ENCODE measurements at regions of chr3 and their contacts with region 1.

Region 1: DNA sequence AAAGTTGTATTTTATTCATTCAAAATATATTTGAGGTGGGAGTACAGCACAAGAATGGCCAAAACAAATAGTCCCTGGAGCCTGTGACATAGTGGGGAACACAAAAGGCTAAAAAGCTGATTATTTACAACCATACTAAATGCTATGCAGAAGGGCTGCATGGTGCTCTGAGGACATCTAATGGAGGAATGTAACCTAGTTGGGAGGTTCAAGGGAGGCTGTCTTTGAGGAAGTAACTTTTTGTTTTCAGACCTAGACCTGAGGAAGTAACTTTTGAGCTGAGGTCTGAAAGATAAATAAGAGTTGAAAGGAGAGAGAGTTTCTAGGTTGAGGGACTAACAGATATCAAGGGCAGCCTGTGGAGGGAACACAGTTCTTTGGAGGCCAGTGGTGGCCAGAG is 34.8 kb upstream of the RASA2 start:
- DNase-seq: peak in 2 of 7 donors; percentile 51 to 52
- H3K4me3 ChIP-seq: no peak overlapping the region
- H3K27ac ChIP-seq: peak overlapping the region in 1 of 5 donors; percentile 18
- H3K4me1 ChIP-seq: peaks cover 0 to 22% of the 10 kb centered on the region in 2 donors
- H3K27me3 ChIP-seq: no peaks in the 10 kb centered on the region
- CTCF ChIP-seq: peak; percentile 32 to 72 (median 64)
- POLR2A ChIP-seq: no peak

Region 2: DNA sequence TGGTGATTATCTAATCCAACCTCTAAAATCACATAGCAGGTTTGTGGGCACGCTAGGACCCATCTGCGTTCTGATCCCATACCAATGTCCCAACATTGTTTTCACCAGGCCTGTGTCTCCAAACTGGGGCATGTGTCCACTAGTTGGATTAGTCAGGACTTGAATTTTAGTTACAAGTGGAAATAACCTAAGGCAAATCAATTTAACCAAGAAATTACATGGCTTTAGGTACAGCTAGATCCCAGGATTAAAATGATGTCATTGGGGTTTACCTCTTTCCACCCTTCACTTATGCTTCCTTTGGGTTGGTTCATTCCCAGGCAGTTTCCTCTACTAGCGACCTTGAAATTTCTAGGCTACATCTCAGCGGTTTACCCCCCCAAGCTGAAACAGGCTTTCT is 267.6 kb before region 1 on chr3:
- intact Hi-C with region 1: no loop called
- DNase-seq: no peak
- H3K4me3 ChIP-seq: no peak overlapping the region
- H3K27ac ChIP-seq: no peak overlapping the region
- H3K4me1 ChIP-seq: no peaks in the 10 kb centered on the region
- H3K27me3 ChIP-seq: no peaks in the 10 kb centered on the region
- CTCF ChIP-seq: no peak
- POLR2A ChIP-seq: no peak

Region 3: DNA sequence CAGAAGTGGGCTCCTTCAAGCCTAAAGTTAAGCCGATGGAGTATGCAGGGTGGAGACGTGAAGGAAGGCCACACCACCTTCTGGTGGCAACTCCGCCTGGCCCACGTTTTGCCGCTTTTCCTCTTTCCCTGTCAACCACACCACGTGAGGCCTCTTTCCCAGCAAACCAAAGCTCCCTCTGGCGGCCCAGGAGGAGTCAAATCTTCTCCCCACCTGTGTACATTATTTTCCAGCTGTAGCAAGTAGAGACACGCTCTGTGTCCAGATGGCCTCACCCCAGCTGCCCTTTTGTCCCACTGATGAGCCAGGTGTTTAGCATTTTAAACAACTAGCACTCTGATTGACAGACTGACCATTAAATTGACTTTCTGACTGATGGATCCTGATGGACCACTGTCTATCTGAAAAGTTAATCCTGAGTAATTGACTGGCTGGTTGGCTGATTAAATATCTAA is 143.4 kb before region 1 on chr3:
- intact Hi-C with region 1: loop called (anchors 5 kb)
- DNase-seq: peak; percentile 59 to 81 (median 70)
- H3K4me3 ChIP-seq: no peak overlapping the region
- H3K27ac ChIP-seq: no peak overlapping the region
- H3K4me1 ChIP-seq: peaks cover 6 to 13% of the 10 kb centered on the region in 2 donors
- H3K27me3 ChIP-seq: no peaks in the 10 kb centered on the region
- CTCF ChIP-seq: peak; percentile 36 to 59 (median 52)
- POLR2A ChIP-seq: no peak

Region 4: DNA sequence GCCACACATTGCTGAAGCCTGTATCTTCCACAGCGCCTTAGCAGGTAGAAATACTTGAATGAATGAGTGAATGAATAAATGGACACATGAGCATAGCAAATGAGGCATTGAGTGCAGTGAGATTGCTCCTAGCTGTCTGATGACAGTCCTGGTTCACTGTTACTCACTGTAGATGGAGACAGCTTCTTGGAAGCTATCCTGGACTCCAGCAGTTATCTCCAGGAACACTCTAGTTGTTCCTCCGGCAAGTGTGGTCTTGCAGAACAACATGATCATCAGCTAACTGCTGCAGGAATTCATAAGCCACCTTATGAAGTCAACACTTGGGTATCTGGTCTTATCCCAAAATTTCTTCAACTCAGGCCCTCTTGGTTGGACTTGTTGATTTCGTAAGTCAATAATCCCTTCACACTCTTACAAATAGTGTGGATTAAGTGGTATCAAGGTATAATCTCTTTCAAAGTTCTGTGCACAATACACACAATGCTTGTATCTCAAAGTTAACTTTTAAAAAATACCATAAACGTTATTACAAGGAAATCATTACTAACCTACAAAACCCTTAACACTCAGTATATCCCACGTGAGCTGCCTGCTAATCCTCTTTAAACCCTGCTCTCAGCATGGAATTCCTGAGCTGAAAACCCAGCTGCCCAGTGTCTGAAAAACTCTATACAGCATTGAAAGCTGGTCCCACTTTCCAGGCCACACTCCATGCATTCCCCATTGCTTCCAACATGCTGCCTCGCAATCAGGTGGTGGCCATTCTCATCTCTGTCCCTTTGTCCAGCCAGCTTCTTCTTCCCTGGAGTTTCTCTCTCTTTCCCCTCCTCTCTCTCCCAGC is 98.2 kb before region 1 on chr3:
- intact Hi-C with region 1: loop called in 1 of 2 experiments (anchors 5 kb)
- DNase-seq: no peak
- H3K4me3 ChIP-seq: no peak overlapping the region
- H3K27ac ChIP-seq: no peak overlapping the region
- H3K4me1 ChIP-seq: no peaks in the 10 kb centered on the region
- H3K27me3 ChIP-seq: no peaks in the 10 kb centered on the region
- CTCF ChIP-seq: no peak
- POLR2A ChIP-seq: no peak

Region 5: DNA sequence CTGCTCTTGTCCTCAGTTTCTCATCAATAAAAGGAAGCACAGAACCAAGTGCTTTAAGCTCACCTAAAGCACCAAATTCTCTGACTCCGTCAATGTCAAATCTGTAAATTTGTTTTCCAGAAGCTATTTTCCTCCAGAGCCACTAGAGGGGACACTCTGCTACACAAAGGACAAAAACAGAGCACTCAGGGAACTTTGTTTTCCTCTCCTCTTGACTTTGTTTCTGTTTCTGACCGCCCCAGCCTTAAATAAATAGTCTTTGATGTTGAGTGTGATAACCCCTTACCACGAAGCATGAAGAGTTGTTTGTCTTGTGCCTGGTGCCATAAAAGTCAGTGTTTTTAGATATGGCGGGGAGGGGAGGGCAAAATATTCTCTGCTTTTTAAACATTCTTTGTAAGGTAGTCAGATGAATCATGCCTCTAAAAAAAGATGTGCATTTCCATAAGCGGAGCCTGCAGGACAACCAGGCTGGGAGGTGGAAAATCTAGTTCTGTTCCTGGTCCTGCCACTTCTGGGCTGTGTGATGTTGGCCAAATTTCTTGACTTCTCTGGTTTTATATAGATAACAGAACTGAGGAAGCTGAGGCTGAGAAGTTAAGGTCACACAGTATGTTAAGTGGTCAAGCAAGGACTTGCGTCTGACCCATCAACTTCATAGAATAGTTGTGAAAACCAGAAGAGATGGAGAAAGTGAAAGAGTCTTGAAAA is 91.0 kb before region 1 on chr3:
- intact Hi-C with region 1: loop called (anchors 5 kb)
- DNase-seq: peak in 2 of 7 donors; percentile 31 to 43
- H3K4me3 ChIP-seq: peak overlapping the region in 1 of 4 donors; percentile 32
- H3K27ac ChIP-seq: peak overlapping the region in 2 of 5 donors; percentile 59 to 77
- H3K4me1 ChIP-seq: peaks cover 6 to 9% of the 10 kb centered on the region in 2 donors
- H3K27me3 ChIP-seq: no peaks in the 10 kb centered on the region
- CTCF ChIP-seq: peak; percentile 63 to 96 (median 88)
- POLR2A ChIP-seq: no peak